Endothelial cell of umbilical vein (primary cell): ENCODE measurements at regions of chr11 and their contacts with region 1.

Region 1: GRCh38 chr11:47980245-47981049 is at the start of gene PTPRJ:
- DNase-seq: peak; percentile 32
- H3K4me3 ChIP-seq: peak within 1 kb of the TSS; percentile 56 to 81 (median 62)
- H3K27ac ChIP-seq: no peak within 1 kb of the TSS
- H3K4me1 ChIP-seq: peaks cover 15% of the 10 kb centered on the region
- H3K27me3 ChIP-seq: no peaks in the 10 kb centered on the region
- CTCF ChIP-seq: no peak
- POLR2A ChIP-seq: peak; percentile 27
- total RNA-seq, gene PTPRJ: 7.7 and 8.8 TPM in 2 replicates

Region 2: DNA sequence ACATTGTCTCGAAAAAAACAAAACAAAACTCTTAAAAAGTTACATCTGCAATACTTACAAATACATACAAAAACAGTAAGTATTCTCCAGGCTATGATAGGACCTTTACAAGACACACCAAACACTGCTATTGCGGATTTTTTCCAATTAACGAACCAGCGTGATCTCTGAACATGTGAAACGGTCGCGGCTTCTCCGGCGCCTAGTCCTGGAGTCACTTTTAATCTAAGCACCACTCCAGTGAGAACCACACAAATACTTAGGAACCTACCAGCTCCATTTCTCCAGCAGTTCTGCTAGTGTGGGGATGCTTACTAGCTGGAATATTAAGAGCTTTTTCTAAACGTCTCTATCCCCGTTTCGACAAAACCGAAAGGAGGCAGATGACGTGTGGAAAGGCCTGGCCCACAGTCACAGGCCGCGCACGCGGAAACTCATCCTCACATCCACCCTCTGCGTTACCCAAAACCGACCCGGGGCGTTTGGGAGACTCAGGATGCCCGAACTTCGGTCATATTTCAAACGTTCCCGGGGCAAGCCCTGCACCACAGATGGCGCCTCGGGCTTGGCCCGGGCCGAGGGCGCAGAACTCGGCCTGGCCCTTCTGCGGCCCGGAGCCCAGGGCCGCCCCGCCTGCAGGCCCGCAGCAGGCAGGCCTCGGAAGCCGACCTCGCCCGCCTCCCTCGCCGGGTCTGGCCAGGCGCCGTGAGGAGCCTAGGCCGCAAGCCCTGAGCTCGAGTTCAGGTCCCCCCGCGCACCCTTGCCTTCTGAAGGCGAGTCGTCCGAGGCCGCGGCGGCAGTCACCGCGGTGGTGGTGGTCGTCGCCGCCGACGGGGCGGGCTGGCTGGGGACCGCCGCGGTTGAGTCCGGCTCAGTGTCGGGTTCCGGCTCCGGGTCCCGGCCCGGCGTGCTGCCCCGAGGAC is 213.9 kb before region 1 on chr11:
- CTCF ChIA-PET with region 1: no interaction called
- POLR2A ChIA-PET with region 1: no interaction called
- dilution Hi-C with region 1: no loop called
- intact Hi-C with region 1: loop called (anchors 5 kb)
- DNase-seq: peak; percentile 73
- H3K4me3 ChIP-seq: peak overlapping the region; percentile 61 to 97 (median 62)
- H3K27ac ChIP-seq: peak overlapping the region; percentile 81
- H3K4me1 ChIP-seq: peaks cover 14% of the 10 kb centered on the region
- H3K27me3 ChIP-seq: no peaks in the 10 kb centered on the region
- CTCF ChIP-seq: no peak
- POLR2A ChIP-seq: no peak

Region 3: GRCh38 chr11:47932544-47932943 is 47.9 kb before region 1 on chr11:
- CTCF ChIA-PET with region 1: interaction called, 6 read pairs
- POLR2A ChIA-PET with region 1: no interaction called
- dilution Hi-C with region 1: no loop called
- intact Hi-C with region 1: loop called (anchors 2 kb)
- DNase-seq: no peak
- H3K4me3 ChIP-seq: no peak overlapping the region
- H3K27ac ChIP-seq: no peak overlapping the region
- H3K4me1 ChIP-seq: no peaks in the 10 kb centered on the region
- H3K27me3 ChIP-seq: no peaks in the 10 kb centered on the region
- CTCF ChIP-seq: no peak
- POLR2A ChIP-seq: no peak

Region 4: GRCh38 chr11:47946682-47947575 is 33.5 kb before region 1 on chr11:
- CTCF ChIA-PET with region 1: no interaction called
- POLR2A ChIA-PET with region 1: no interaction called
- dilution Hi-C with region 1: no loop called
- intact Hi-C with region 1: loop called (anchors 1 kb)
- DNase-seq: peak; percentile 88
- H3K4me3 ChIP-seq: no peak overlapping the region
- H3K27ac ChIP-seq: peak overlapping the region; percentile 60
- H3K4me1 ChIP-seq: peaks cover 10% of the 10 kb centered on the region
- H3K27me3 ChIP-seq: no peaks in the 10 kb centered on the region
- CTCF ChIP-seq: no peak
- POLR2A ChIP-seq: no peak

Region 5: DNA sequence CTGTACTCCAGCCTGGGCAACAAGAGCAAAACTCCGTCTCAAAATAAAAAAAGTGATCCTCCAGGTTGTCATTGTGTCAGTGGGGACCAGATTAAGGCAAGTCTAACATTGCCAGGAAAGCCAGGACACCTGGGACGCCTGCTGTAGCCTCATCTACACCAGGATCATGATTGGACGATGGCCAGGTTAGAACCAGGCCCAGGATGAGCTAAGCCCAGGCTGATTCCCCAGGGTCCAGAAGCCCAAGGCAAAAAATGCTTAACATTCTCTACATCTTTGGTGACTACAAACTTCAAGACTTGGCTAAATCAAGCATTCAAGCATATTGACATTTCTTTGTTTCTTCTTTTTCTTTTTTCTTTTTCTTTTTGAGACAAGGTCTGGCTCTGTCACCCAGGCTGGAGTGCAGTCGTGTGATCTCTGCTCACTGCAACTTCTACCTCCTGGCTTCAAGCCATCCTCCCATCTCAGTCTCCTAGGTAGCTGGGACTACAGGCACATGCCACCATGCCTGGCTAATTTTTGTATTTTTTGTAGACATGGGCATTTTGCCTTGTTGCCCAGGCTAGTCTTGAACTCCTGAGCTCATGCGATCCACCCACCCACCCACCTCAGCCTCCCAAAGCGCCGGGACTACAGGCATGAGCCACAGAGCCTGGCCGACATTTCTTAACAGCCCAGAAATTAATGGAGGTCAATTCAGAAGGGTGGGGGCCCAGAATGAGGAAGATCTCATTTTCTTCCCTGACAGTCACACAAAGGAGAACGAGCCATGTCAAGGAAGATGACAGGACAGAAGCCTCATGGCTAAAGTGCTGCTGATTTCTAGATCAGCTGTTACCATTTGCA is 12.6 kb before region 1 on chr11:
- CTCF ChIA-PET with region 1: no interaction called
- POLR2A ChIA-PET with region 1: no interaction called
- dilution Hi-C with region 1: no loop called
- intact Hi-C with region 1: loop called (anchors 1 kb)
- DNase-seq: no peak
- H3K4me3 ChIP-seq: no peak overlapping the region
- H3K27ac ChIP-seq: no peak overlapping the region
- H3K4me1 ChIP-seq: no peaks in the 10 kb centered on the region
- H3K27me3 ChIP-seq: no peaks in the 10 kb centered on the region
- CTCF ChIP-seq: no peak
- POLR2A ChIP-seq: no peak

Region 6: GRCh38 chr11:48063424-48063978 is 83.1 kb after region 1 on chr11:
- CTCF ChIA-PET with region 1: no interaction called
- POLR2A ChIA-PET with region 1: no interaction called
- dilution Hi-C with region 1: no loop called
- intact Hi-C with region 1: loop called (anchors 5 kb)
- DNase-seq: peak; percentile 57
- H3K4me3 ChIP-seq: no peak overlapping the region
- H3K27ac ChIP-seq: no peak overlapping the region
- H3K4me1 ChIP-seq: peaks cover 22% of the 10 kb centered on the region
- H3K27me3 ChIP-seq: no peaks in the 10 kb centered on the region
- CTCF ChIP-seq: no peak
- POLR2A ChIP-seq: no peak

Region 7: DNA sequence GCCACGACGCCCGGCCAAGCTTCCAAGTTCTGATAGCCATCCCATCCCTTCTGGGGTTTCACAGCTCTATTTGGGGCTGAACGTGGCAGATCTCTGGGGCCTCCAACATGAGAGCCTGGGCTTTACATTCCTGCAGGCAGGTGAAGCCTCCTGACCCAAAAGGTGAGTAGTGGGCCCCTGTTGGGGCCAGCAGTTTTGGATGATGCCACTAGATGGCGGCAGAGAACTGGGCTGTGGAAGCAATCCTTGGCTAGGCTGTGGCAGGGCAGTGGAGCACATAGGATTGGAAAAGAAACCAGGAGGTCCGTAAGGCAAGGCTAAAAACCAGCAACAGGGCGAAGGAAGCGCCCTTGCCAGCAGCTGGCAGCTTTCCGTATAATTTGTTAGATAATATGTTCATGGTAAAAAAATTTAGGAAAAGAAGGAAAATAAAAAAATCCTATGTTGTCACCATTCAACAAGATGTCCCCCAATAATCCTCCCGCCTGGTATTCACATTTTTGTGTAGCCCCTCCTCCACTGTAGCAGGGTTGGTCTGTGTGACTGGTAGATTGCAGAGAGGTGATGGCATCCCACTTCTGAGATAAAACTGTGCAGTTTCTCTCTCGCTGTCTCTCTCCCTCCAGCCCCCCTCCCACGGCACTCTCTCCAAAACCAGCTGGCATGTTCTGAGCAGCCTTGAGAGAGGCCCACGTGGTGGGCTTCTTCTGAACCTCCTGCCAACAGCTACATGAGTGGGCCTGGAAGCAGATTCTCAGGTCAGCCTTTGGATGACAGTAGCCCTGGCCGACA is 192.6 kb after region 1 on chr11:
- CTCF ChIA-PET with region 1: no interaction called
- POLR2A ChIA-PET with region 1: no interaction called
- dilution Hi-C with region 1: no loop called
- intact Hi-C with region 1: no loop called
- DNase-seq: peak; percentile 52
- H3K4me3 ChIP-seq: no peak overlapping the region
- H3K27ac ChIP-seq: no peak overlapping the region
- H3K4me1 ChIP-seq: peaks cover 6% of the 10 kb centered on the region
- H3K27me3 ChIP-seq: no peaks in the 10 kb centered on the region
- CTCF ChIP-seq: peak; percentile 84 to 98
- POLR2A ChIP-seq: no peak